ENCODE measurements at regions of chr6 and their contacts with region 1.

Region 1: DNA sequence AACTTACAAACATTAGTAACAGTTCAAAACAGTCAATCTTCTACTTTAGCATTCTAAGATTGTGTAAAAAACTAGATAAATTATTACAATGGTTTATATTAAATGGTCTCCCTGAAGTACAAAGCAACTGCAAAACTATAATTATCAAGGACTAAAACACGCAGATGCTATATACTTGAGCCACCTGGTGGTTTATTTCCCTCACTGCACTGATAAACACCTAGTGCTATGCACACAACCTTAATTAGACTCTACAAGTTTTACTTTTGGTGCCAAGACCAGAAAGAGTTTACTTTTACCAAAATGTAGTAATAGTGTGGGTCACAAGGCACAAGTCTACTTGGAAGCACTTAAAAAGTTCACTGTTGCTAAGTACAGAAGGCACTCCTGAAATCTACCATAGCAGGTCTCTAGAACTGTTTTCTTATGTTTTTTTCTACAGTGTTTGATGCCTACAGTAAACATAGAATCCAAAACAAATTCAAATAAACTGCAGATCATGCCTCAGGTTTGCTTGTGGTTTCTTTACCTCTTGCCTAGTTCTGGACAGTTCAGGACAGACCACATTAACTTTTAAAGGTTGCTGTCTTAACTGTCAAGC is 49.2 kb downstream of the GMDS start:
- DNase-seq: no peak
- H3K4me3 Mint-ChIP-seq: no peak overlapping the region
- H3K27ac Mint-ChIP-seq: no peak overlapping the region
- H3K4me1 Mint-ChIP-seq: no peaks in the 10 kb centered on the region
- H3K27me3 Mint-ChIP-seq: peaks cover 5% of the 10 kb centered on the region

Region 2: DNA sequence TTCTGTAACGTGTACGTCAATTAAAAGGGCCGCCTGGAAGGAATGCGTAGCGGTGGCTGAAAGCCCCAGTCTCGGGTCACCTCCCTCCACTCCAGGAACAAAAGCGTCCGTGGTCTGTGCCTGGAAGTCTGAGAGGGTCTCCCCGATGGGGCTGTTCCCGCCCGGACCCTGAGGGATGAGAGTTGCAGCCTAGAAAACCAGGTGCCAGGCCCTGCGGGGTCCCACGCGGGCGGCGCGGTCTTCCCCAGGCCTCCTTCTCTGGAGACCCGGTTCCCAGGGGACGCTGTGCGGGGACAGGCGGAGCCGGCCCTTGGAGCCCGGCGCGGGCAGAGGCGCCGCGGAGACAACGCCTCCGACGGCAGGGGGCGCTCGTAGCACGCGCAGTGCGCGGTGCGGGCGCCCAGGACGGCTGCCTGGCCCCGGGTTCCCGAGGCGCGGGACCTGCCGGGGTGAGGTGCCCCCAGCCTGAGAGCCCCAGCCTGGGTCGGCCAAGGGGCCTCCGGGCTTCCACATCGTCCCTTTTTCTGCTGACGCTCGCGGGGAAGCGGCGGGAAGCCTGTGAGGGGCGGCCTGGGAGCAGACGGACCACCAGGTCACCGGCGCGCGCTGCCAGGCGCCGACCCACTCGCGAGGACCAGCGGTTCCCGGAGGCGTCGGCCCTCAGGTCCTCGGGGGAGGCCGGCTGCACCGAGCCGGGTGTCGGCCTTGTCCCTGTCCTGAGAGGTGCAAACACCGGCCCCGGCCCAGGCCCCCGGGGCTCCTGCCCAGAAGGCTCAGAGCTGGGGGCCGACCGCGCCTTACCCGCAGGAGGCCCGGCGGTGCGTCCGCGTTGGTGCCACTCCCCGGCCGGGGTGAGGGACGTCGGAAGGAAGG is 591.8 kb before region 1 on chr6:
- intact Hi-C with region 1: loop called (anchors 1 kb)
- DNase-seq: peak; percentile 37
- H3K4me3 Mint-ChIP-seq: no peak overlapping the region
- H3K27ac Mint-ChIP-seq: no peak overlapping the region
- H3K4me1 Mint-ChIP-seq: peaks cover 13% of the 10 kb centered on the region
- H3K27me3 Mint-ChIP-seq: peaks cover 84% of the 10 kb centered on the region

Region 3: GRCh38 chr6:1893470-1894130 is 302.6 kb before region 1 on chr6:
- intact Hi-C with region 1: loop called (anchors 2 kb)
- DNase-seq: no peak
- H3K4me3 Mint-ChIP-seq: no peak overlapping the region
- H3K27ac Mint-ChIP-seq: no peak overlapping the region
- H3K4me1 Mint-ChIP-seq: peaks cover 12% of the 10 kb centered on the region
- H3K27me3 Mint-ChIP-seq: no peaks in the 10 kb centered on the region

Region 4: GRCh38 chr6:2353412-2354137 is 157.4 kb after region 1 on chr6:
- intact Hi-C with region 1: loop called (anchors 1 kb)
- DNase-seq: peak; percentile 7
- H3K4me3 Mint-ChIP-seq: no peak overlapping the region
- H3K27ac Mint-ChIP-seq: no peak overlapping the region
- H3K4me1 Mint-ChIP-seq: no peaks in the 10 kb centered on the region
- H3K27me3 Mint-ChIP-seq: peaks cover 2% of the 10 kb centered on the region